Heart right ventricle (tissue), 16 donors: ENCODE measurements at regions of chr13 and their contacts with region 1.

Region 1: DNA sequence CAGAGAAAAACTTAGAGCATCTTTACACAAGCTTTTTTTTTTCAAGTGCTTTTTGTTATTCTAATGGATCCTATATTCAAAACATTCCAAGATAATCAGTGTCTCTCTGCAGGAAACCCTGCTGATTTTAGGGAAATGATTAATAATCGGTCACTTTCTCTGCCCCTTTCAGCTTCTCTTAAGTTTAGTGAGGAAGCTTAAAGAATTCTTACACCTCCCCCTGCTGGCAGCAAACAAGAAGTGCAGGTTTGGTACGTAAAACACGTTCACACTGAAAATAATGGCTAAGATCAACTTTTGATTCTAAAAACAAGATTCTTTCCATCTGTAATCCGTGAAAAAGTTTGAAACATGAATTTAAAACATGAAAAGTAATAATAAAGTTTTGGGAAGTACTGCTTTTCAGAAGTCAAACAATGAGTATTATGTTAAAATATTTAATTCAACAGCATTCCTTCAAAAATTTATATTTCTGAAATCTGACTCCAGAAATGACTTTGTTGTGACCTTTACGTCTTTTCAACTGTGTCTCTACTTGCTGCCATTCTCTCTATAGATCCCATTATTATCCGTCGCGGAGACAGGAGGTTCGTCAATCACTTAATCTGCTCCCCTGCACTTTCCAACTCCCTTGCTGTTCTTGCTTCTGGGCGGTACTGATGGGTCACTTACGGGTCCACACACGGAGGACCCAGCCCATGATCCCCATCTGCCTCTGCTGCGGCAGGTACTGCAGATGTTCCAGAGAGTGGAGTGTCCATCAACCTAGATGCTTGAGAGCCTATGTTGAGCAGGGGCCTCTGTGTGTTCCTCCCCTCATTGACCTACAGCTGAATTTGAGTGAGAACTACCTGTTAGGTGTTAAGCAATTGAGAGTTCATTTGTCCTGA is 203.1 kb upstream of the EDNRB start:
- DNase-seq: peak in 1 of 2 donors; percentile 45
- ATAC-seq: peak in 4 of 8 donors; percentile 35 to 55 (median 48)
- H3K4me3 ChIP-seq: peak overlapping the region in 3 of 10 donors; percentile 2 to 27 (median 12)
- H3K27ac ChIP-seq: no peak overlapping the region
- H3K4me1 ChIP-seq: peaks cover 0 to 10% (median 0%) of the 10 kb centered on the region in 9 donors
- H3K27me3 ChIP-seq: peaks cover 0 to 7% (median 0%) of the 10 kb centered on the region in 7 donors
- CTCF ChIP-seq: peak; percentile 81 to 94 (median 89)

Region 2: GRCh38 chr13:77779552-77780272 is 342.0 kb before region 1 on chr13:
- intact Hi-C with region 1: loop called (anchors 1 to 5 kb)
- DNase-seq: peak in 1 of 2 donors; percentile 59
- ATAC-seq: peak in 7 of 8 donors; percentile 41 to 84 (median 67)
- H3K4me3 ChIP-seq: no peak overlapping the region
- H3K27ac ChIP-seq: peak overlapping the region in 1 of 10 donors; percentile 34
- H3K4me1 ChIP-seq: peaks cover 0 to 9% (median 0%) of the 10 kb centered on the region in 9 donors
- H3K27me3 ChIP-seq: no peaks in the 10 kb centered on the region
- CTCF ChIP-seq: peak; percentile 53 to 85 (median 76)

Region 3: GRCh38 chr13:77913003-77913402 is 208.7 kb before region 1 on chr13:
- intact Hi-C with region 1: loop called in 1 of 10 experiments (anchors 5 kb)
- DNase-seq: no peak
- ATAC-seq: no peak
- H3K4me3 ChIP-seq: peak overlapping the region in 7 of 10 donors; percentile 58 to 75 (median 70)
- H3K27ac ChIP-seq: peak overlapping the region in 2 of 10 donors; percentile 4 to 11
- H3K4me1 ChIP-seq: peaks cover 0 to 60% (median 4%) of the 10 kb centered on the region in 9 donors
- H3K27me3 ChIP-seq: no peaks in the 10 kb centered on the region
- CTCF ChIP-seq: no peak

Region 4: DNA sequence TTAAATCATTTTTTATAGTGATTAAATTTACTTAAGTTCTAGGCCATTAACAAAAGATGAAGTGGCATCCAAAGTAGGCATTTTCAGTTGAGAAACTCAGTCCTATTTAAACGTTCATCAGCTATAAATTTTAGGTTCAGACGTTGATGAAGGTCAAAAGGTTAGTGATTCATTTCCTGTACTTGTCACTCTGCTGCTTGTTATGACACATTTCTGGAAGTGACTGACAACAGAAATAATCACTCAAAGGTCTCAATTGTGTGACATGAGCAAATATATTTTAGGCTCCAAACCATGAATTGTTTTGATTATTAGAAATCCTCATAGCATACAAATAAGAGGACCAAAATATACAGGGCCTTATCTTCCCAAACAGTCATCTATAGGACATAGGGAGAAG is 192.8 kb before region 1 on chr13:
- intact Hi-C with region 1: loop called in 2 of 10 experiments (anchors 10 kb)
- DNase-seq: no peak
- ATAC-seq: no peak
- H3K4me3 ChIP-seq: no peak overlapping the region
- H3K27ac ChIP-seq: peak overlapping the region in 1 of 10 donors; percentile 32
- H3K4me1 ChIP-seq: peaks cover 0 to 13% (median 0%) of the 10 kb centered on the region in 9 donors
- H3K27me3 ChIP-seq: no peaks in the 10 kb centered on the region
- CTCF ChIP-seq: no peak

Region 5: GRCh38 chr13:78364711-78365110 is 243.0 kb after region 1 on chr13:
- intact Hi-C with region 1: no loop called
- DNase-seq: no peak
- ATAC-seq: no peak
- H3K4me3 ChIP-seq: no peak overlapping the region
- H3K27ac ChIP-seq: no peak overlapping the region
- H3K4me1 ChIP-seq: no peaks in the 10 kb centered on the region
- H3K27me3 ChIP-seq: no peaks in the 10 kb centered on the region
- CTCF ChIP-seq: no peak